Ascending aorta (tissue), 2 donors: ENCODE measurements at regions of chr20 and their contacts with region 1.

Region 1: GRCh38 chr20:39049684-39050554 is 87.8 kb downstream of the DHX35 start:
- DNase-seq: peak in 1 of 2 donors; percentile 83
- H3K4me3 ChIP-seq: peak overlapping the region; percentile 70 to 81
- H3K27ac ChIP-seq: peak overlapping the region; percentile 60 to 62
- H3K4me1 ChIP-seq: no peaks in the 10 kb centered on the region
- H3K27me3 ChIP-seq: no peaks in the 10 kb centered on the region
- CTCF ChIP-seq: peak; percentile 95 to 99 (median 99)

Region 2: DNA sequence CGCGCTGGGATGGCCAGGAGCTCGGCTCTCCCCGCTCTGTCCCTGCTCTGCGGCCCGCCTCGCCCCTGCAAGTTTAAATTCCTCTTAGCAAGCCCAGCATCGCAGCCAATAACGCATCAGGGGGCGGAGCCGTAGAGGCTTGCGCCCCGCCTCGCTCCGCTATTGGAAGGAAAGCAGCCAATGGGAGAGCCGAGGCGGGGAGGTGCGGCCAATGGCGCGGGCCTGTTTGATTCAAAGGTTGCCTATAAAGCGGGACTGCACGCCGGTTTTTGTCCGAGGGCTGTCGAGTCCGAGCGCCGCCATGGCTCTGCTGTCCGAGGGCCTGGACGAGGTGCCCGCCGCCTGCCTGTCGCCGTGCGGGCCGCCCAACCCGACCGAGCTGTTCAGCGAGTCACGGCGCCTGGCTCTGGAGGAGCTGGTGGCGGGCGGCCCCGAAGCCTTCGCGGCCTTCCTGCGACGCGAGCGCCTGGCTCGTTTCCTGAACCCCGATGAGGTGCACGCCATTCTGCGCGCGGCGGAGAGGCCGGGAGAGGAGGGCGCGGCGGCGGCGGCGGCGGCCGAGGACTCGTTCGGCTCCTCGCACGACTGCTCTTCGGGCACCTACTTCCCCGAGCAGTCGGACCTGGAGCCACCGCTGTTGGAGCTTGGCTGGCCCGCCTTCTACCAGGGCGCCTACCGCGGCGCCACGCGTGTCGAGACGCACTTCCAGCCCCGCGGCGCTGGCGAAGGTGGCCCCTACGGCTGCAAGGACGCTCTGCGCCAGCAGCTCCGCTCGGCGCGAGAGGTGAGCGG is 123.6 kb before region 1 on chr20 and contains the start of gene FAM83D:
- intact Hi-C with region 1: loop called (anchors 1 kb)
- DNase-seq: peak; percentile 88 to 97
- H3K4me3 ChIP-seq: peak within 1 kb of the TSS; percentile 56 to 79
- H3K27ac ChIP-seq: no peak within 1 kb of the TSS
- H3K4me1 ChIP-seq: peaks cover 0 to 6% of the 10 kb centered on the region in 2 donors
- H3K27me3 ChIP-seq: no peaks in the 10 kb centered on the region
- CTCF ChIP-seq: no peak
- total RNA-seq, gene FAM83D: 0.53 TPM

Region 3: GRCh38 chr20:39070484-39071231 is 20.7 kb after region 1 on chr20:
- intact Hi-C with region 1: no loop called
- DNase-seq: no peak
- H3K4me3 ChIP-seq: no peak overlapping the region
- H3K27ac ChIP-seq: no peak overlapping the region
- H3K4me1 ChIP-seq: no peaks in the 10 kb centered on the region
- H3K27me3 ChIP-seq: no peaks in the 10 kb centered on the region
- CTCF ChIP-seq: no peak

Region 4: DNA sequence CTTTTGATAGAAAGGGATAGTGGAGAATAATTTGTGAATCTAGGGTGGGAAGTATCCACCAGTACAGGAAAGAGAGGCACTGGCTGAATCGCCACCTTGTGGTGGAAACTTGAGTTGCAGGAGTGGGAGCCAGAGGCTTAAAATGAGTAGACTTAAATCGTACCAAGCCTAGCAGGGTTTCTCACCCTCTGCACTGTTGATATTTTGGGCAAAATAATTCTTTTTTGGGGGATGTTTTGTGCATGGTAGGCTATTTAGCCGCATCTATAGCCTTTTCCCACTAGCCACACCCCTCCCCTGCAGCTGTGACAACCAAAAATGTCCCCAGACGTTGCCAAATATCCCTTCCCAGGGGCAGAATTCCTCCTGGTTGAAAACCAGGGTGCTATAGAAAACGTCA is 31.3 kb after region 1 on chr20:
- intact Hi-C with region 1: loop called (anchors 1 kb)
- DNase-seq: peak; percentile 14 to 88
- H3K4me3 ChIP-seq: no peak overlapping the region
- H3K27ac ChIP-seq: no peak overlapping the region
- H3K4me1 ChIP-seq: no peaks in the 10 kb centered on the region
- H3K27me3 ChIP-seq: no peaks in the 10 kb centered on the region
- CTCF ChIP-seq: peak; percentile 59 to 86 (median 81)